Heart left ventricle (tissue), 16 donors: ENCODE measurements at regions of chr1 and their contacts with region 1.

Region 1: GRCh38 chr1:110407260-110408210 is at the start of gene LAMTOR5:
- DNase-seq: peak; percentile 95 to 96 (median 96)
- ATAC-seq: peak; percentile 94 to 98 (median 97)
- H3K4me3 ChIP-seq: peak within 1 kb of the TSS; percentile 65 to 100 (median 84)
- H3K27ac ChIP-seq: peak within 1 kb of the TSS; percentile 84 to 97 (median 93)
- H3K4me1 ChIP-seq: peaks cover 0 to 27% (median 19%) of the 10 kb centered on the region in 12 donors
- H3K27me3 ChIP-seq: no peaks in the 10 kb centered on the region
- CTCF ChIP-seq: peak in 6 of 12 donors; percentile 13 to 32 (median 20)
- POLR2A ChIP-seq: peak; percentile 20 to 82
- total RNA-seq, gene LAMTOR5: 130 to 267 (median 221) TPM

Region 2: DNA sequence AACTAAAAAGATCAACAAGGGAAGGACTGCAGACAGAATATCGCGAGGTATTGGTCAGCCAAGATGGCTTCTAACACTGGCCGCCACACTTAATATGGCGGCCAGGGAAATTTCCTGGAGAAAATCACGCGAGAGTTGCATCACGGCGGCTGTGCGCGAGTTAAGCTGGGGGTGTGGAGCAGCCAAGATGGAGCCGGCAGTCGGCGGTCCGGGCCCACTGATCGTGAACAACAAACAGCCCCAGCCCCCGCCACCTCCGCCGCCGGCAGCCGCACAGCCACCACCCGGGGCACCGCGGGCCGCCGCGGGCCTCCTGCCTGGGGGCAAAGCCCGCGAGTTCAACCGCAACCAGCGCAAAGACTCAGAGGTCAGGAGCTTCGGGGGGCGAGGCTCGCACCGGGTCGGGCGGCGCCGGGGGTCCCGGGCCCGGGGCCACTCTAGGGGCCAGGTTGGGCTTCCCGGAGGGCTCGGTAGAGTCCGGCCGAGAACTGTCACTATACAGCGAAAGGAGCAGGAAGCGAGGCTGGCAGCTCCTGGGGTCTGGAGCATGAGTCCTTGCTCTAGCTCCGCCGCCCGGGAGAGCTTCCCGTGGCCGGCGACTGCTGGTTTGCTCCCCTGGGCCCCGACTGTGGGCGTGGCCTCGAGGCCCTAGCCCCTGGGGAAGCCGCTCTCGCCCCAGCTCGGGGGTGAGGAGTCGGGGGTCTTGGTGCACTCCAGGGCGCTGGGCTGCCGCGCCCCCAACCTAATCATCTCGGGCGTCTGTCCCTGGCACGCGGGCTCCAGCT is 372.9 kb before region 1 on chr1 and contains the start of gene STRIP1:
- intact Hi-C with region 1: loop called in 1 of 10 experiments (anchors 10 kb)
- DNase-seq: peak; percentile 93 to 95 (median 94)
- ATAC-seq: peak; percentile 91 to 97 (median 96)
- H3K4me3 ChIP-seq: peak within 1 kb of the TSS; percentile 76 to 96 (median 93)
- H3K27ac ChIP-seq: peak within 1 kb of the TSS; percentile 84 to 96 (median 90)
- H3K4me1 ChIP-seq: peaks cover 5 to 39% (median 13%) of the 10 kb centered on the region in 12 donors
- H3K27me3 ChIP-seq: no peaks in the 10 kb centered on the region
- CTCF ChIP-seq: no peak
- POLR2A ChIP-seq: peak in 1 of 2 donors; percentile 62
- total RNA-seq, gene STRIP1: 14.7 to 22.8 (median 19.2) TPM

Region 3: GRCh38 chr1:110338886-110339406 is 68.6 kb before region 1 on chr1 and contains the start of gene RBM15:
- intact Hi-C with region 1: loop called in 9 of 10 experiments (anchors 1 to 5 kb)
- DNase-seq: peak; percentile 98 to 99 (median 99)
- ATAC-seq: peak; percentile 82 to 91 (median 88)
- H3K4me3 ChIP-seq: peak within 1 kb of the TSS; percentile 65 to 95 (median 82)
- H3K27ac ChIP-seq: peak within 1 kb of the TSS; percentile 89 to 100 (median 97)
- H3K4me1 ChIP-seq: peaks cover 5 to 61% (median 50%) of the 10 kb centered on the region in 12 donors
- H3K27me3 ChIP-seq: no peaks in the 10 kb centered on the region
- CTCF ChIP-seq: no peak
- POLR2A ChIP-seq: no peak
- total RNA-seq, gene RBM15: 14.1 to 24.4 (median 19.2) TPM

Region 4: GRCh38 chr1:110350360-110350759 is 57.2 kb before region 1 on chr1:
- intact Hi-C with region 1: no loop called
- DNase-seq: no peak
- ATAC-seq: no peak
- H3K4me3 ChIP-seq: no peak overlapping the region
- H3K27ac ChIP-seq: no peak overlapping the region
- H3K4me1 ChIP-seq: peaks cover 4 to 68% (median 53%) of the 10 kb centered on the region in 12 donors
- H3K27me3 ChIP-seq: no peaks in the 10 kb centered on the region
- CTCF ChIP-seq: no peak
- POLR2A ChIP-seq: no peak